ENCODE measurements at regions of chr21 and their contacts with region 1.

Region 1: GRCh38 chr21:35414507-35415139 is 365.5 kb upstream of the RUNX1 start:
- DNase-seq: no peak
- H3K4me3 ChIP-seq: no peak overlapping the region
- H3K27ac ChIP-seq: no peak overlapping the region
- H3K4me1 ChIP-seq: no peaks in the 10 kb centered on the region
- H3K27me3 ChIP-seq: no peaks in the 10 kb centered on the region
- CTCF ChIP-seq: no peak
- EP300 ChIP-seq: no peak
- POLR2A ChIP-seq: no peak

Region 2: GRCh38 chr21:35400233-35400957 is 14.2 kb before region 1 on chr21:
- intact Hi-C with region 1: loop called in 1 of 4 experiments (anchors 2 kb)
- DNase-seq: no peak
- H3K4me3 ChIP-seq: no peak overlapping the region
- H3K27ac ChIP-seq: no peak overlapping the region
- H3K4me1 ChIP-seq: no peaks in the 10 kb centered on the region
- H3K27me3 ChIP-seq: no peaks in the 10 kb centered on the region
- CTCF ChIP-seq: peak in 2 of 3 donors; percentile 26 to 29
- EP300 ChIP-seq: no peak
- POLR2A ChIP-seq: no peak

Region 3: GRCh38 chr21:35850029-35850428 is 435.4 kb after region 1 on chr21:
- intact Hi-C with region 1: loop called in 1 of 4 experiments (anchors 10 kb)
- DNase-seq: no peak
- H3K4me3 ChIP-seq: no peak overlapping the region
- H3K27ac ChIP-seq: no peak overlapping the region
- H3K4me1 ChIP-seq: peaks cover 7% of the 10 kb centered on the region
- H3K27me3 ChIP-seq: no peaks in the 10 kb centered on the region
- CTCF ChIP-seq: no peak
- EP300 ChIP-seq: no peak
- POLR2A ChIP-seq: no peak

Region 4: GRCh38 chr21:36015045-36015444 is 600.4 kb after region 1 on chr21:
- intact Hi-C with region 1: no loop called
- DNase-seq: no peak
- H3K4me3 ChIP-seq: no peak overlapping the region
- H3K27ac ChIP-seq: no peak overlapping the region
- H3K4me1 ChIP-seq: no peaks in the 10 kb centered on the region
- H3K27me3 ChIP-seq: no peaks in the 10 kb centered on the region
- CTCF ChIP-seq: no peak
- EP300 ChIP-seq: no peak
- POLR2A ChIP-seq: no peak

Measured in ovary (tissue), 10 donors.